Esophagus squamous epithelium (tissue), 5 donors: ENCODE measurements at regions of chr22 and their contacts with region 1.

Region 1: DNA sequence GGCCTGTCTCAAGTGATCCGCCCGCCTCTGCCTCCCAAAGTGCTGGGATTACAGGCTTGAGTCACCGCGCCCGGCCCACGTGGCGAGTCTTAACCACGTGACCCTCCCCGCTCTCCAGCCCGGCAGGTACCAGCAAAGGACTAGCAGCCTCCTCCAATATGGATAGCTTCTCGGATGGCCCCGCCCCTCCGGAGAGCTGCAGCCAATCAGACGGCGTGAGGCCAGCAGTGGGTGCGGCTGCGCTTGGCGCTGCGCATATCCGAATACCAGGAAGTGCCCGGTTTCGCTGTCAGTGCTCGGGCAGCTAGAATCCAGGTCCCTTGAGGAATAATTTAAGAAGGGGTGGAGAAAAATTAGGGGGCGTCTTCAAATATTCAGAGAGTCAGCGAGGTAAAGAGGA is 14.7 kb upstream of the PISD start:
- DNase-seq: peak; percentile 74
- H3K4me3 ChIP-seq: peak overlapping the region; percentile 25 to 67 (median 48)
- H3K27ac ChIP-seq: peak overlapping the region; percentile 78 to 85 (median 82)
- H3K4me1 ChIP-seq: peaks cover 0 to 27% (median 12%) of the 10 kb centered on the region in 3 donors
- H3K27me3 ChIP-seq: no peaks in the 10 kb centered on the region
- CTCF ChIP-seq: peak in 1 of 6 experiments; percentile 13
- POLR2A ChIP-seq: peak in 3 of 4 donors; percentile 41 to 58 (median 51)

Region 2: DNA sequence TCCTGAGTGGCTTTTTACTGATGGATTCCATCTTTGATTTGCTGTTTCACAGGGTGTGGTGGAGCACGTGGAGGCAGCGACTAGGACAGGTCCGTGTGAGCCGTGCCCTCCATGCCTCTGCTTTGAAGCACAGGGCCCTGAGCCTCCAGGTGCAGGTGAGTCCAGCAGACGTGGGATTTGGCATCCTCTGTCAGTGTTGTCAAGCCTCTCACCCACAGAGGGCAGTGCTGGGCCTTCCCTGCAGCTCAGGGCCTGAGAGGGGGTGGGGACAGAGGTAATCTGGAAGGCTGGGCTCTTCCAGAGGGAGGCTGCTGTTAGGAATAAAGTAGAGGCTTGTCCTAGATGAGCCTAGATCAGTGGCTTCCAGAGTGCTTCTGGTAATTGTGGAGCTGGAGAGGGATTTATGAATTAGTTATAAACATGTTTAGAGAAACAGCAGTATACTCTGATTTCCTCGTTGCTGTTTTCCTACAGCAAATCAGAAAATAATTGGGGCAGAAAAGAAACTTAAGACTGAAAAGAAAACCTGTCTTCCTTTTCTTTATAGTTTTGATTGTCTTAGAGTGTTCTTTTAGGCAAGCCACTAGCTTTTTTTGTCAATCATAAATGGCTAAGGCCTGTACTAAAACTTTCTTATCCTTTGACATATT is 115.3 kb before region 1 on chr22:
- intact Hi-C with region 1: no loop called
- DNase-seq: no peak
- H3K4me3 ChIP-seq: no peak overlapping the region
- H3K27ac ChIP-seq: no peak overlapping the region
- H3K4me1 ChIP-seq: peaks cover 0 to 5% (median 0%) of the 10 kb centered on the region in 3 donors
- H3K27me3 ChIP-seq: no peaks in the 10 kb centered on the region
- CTCF ChIP-seq: peak in 5 of 6 experiments; percentile 53 to 70 (median 64)
- POLR2A ChIP-seq: no peak

Region 3: DNA sequence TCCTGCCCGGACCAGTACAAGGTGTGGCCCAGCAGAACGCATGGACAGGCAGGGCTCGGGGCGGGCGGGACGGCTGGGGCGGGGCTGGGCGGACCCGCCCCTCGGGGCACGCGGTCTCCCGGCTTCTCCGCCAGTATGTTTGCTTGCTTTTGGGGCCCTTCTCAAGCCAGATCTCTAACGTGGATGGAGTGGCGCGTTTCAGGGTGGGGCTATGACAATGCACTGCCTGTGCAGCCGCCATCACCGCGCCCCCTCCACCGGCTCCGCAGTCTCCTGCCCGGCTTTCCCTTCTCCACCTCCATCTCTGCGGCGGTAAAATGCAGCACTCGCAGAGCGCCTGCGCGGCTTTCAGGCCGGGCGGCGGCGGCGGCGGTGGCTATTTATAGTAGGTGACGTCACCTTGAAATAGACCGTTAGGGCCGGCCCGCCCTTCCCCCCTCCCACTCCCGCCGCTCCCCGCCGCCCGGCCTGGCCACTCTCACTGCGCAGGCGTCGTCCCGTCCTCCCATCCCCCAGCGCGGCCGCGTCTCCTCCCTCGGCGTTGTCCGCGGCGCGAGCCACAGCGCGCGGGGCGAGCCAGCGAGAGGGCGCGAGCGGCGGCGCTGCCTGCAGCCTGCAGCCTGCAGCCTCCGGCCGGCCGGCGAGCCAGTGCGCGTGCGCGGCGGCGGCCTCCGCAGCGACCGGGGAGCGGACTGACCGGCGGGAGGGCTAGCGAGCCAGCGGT is 267.4 kb after region 1 on chr22 and contains the start of gene YWHAH:
- intact Hi-C with region 1: loop called (anchors 10 kb)
- DNase-seq: peak; percentile 75
- H3K4me3 ChIP-seq: peak within 1 kb of the TSS; percentile 70 to 97 (median 82)
- H3K27ac ChIP-seq: peak within 1 kb of the TSS; percentile 93 to 99 (median 97)
- H3K4me1 ChIP-seq: peaks cover 23 to 46% (median 25%) of the 10 kb centered on the region in 3 donors
- H3K27me3 ChIP-seq: no peaks in the 10 kb centered on the region
- CTCF ChIP-seq: no peak
- POLR2A ChIP-seq: peak in 3 of 4 donors; percentile 44 to 95 (median 88)
- total RNA-seq, gene YWHAH: 42.4 to 63.2 (median 54.2) TPM